GM10248 (cell line): ENCODE measurements at regions of chr20 and their contacts with region 1.

Region 1: DNA sequence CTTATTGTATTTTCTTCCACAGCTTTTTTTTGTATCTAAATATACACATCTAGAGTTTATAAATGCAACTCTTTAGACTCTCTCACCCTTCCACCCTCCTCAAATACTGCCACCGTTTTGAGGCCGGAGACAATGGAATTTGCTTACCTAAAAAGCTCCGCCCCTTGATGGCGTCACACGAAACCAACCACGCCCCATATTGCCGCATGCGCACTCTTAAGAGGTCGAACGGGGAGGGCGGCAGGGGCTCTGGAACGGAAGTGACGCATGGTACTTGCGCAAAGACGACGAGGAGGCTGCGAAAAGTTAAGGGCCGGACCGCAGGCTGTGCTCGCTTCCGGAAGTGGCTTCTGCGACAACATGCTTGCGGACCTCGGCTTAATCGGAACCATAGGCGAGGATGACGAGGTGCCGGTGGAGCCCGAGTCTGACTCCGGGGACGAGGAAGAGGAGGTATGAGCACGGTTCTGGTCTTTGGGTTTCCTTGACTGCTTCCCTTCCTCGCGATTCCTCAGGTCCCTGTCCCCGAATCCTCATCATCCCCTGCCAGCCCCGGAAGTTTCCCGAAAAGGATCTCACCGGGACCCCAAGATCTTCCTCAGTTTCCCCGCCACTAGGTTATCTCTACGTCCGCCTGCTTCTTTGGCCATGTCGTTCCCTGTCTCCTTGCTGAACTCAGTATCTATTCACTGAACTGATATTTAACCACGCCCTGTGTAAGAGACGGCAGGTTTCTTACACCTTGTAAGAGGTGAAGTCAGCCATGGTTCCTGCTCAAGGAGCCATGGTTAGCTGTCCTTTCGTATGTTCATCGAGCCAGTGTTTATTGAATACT is at the start of gene DDX27:
- DNase-seq: peak; percentile 96
- CTCF ChIP-seq: no peak

Region 2: GRCh38 chr20:48326434-48327267 is 892.7 kb before region 1 on chr20:
- CTCF ChIA-PET with region 1: no interaction called
- POLR2A ChIA-PET with region 1: no interaction called
- DNase-seq: no peak
- CTCF ChIP-seq: no peak

Region 3: GRCh38 chr20:49140834-49141233 is 78.5 kb before region 1 on chr20:
- CTCF ChIA-PET with region 1: interaction called, 103 read pairs
- POLR2A ChIA-PET with region 1: no interaction called
- DNase-seq: no peak
- CTCF ChIP-seq: no peak

Region 4: GRCh38 chr20:49166534-49167449 is 52.5 kb before region 1 on chr20:
- CTCF ChIA-PET with region 1: interaction called, 24 read pairs
- POLR2A ChIA-PET with region 1: no interaction called
- DNase-seq: peak; percentile 50
- CTCF ChIP-seq: no peak

Region 5: DNA sequence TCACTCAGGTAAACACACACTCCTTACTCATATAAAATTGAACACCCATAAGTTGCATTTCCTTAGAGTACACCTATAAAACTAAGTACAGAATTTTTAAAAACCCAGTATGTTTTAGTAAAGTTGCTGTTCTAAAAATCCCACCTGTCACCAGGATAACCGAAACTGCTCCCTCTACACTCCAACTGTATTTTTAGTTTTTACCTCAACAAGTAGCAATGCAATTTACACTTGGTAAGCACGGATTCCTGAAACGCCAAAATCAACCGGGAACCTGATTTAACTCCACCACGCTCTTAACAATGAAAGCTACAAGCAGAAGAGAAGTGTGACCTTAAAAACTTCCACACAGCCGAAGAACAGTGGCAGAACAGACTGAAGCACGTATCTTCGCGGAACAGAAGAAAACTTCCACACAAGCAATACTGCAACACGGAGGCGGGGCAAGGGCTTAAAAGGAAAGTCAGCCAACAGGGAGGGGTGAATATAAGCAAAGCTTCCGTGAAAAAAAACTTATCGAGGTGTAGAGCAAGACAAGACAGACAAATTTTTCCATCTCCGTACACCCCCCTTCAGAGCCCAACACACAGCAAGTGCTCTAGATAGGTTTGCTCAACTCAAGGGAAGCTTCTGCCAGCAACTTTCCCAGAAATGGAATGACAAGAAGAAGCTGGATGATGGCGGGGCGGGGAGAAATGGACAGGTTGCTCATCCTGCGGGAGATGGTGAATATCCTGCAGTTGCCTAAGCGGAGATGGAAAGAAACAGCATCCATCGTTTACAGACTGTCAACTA is 32.6 kb before region 1 on chr20:
- CTCF ChIA-PET with region 1: interaction called, 41 read pairs
- POLR2A ChIA-PET with region 1: no interaction called
- DNase-seq: peak; percentile 63
- CTCF ChIP-seq: no peak

Region 6: GRCh38 chr20:49207076-49207475 is 12.2 kb before region 1 on chr20:
- CTCF ChIA-PET with region 1: interaction called, 45 read pairs
- POLR2A ChIA-PET with region 1: no interaction called
- DNase-seq: peak; percentile 35
- CTCF ChIP-seq: peak; percentile 40